ENCODE measurements at regions of chr19 and their contacts with region 1.

Region 1: GRCh38 chr19:44002566-44003460 is at the start of gene ZNF230:
- DNase-seq: peak; percentile 91
- H3K4me3 Mint-ChIP-seq: peak within 1 kb of the TSS; percentile 99
- H3K27ac Mint-ChIP-seq: peak within 1 kb of the TSS; percentile 94
- H3K4me1 Mint-ChIP-seq: peaks cover 18% of the 10 kb centered on the region
- H3K27me3 Mint-ChIP-seq: no peaks in the 10 kb centered on the region
- total RNA-seq, gene ZNF230: 3.8 TPM

Region 2: DNA sequence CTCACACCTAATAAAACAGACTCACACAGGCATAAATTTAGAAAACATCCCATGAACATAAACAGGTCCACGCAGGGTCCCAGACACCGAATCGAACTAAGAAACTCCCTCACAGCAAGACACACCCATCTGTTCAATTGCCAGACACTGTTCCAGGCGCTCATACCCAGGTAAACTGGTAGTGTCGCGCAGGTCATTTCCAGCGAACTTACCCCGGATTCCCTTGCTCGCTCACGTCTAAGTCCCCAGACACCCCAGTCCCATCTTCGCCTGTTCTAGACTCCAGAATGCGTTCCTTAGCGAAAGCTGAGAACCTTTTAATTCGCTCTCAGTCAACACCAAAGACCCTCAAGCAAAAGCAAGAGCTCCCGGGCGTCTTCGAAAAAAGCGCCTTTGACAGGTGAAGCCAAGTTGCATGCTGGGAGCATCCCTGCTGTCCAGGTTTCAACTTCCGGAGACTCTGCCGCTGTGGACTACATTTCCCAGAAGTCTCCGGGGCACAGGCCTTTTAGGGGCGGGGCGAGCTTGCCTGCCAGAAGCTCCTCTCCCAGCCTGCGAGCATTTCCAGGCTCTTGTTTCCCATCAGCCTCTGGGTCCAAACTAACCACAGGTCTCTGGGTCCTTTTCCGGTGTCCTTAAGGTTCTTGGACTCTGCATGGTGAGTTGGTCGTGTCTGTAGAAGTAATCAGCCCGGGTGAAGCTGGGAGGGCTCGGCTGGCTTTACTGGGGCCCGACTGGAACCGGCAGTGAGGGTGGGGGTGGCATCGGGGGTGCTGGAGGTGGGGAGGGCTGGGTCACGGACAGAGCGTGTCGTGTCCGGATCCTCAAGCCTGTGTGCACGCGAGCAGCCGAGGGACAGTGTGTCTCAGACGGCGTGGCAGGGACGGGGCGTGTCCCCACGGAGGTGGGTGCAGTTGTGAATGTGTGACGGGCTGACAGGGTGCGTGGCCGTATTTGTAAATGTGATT is 175.7 kb before region 1 on chr19 and contains the start of gene ZNF283:
- CTCF ChIA-PET with region 1: no interaction called
- POLR2A ChIA-PET with region 1: no interaction called
- intact Hi-C with region 1: no loop called
- DNase-seq: peak; percentile 92
- H3K4me3 Mint-ChIP-seq: peak within 1 kb of the TSS; percentile 88
- H3K27ac Mint-ChIP-seq: peak within 1 kb of the TSS; percentile 54
- H3K4me1 Mint-ChIP-seq: peaks cover 16% of the 10 kb centered on the region
- H3K27me3 Mint-ChIP-seq: no peaks in the 10 kb centered on the region
- total RNA-seq, gene ZNF283: 5.2 to 8.1 TPM

Region 3: DNA sequence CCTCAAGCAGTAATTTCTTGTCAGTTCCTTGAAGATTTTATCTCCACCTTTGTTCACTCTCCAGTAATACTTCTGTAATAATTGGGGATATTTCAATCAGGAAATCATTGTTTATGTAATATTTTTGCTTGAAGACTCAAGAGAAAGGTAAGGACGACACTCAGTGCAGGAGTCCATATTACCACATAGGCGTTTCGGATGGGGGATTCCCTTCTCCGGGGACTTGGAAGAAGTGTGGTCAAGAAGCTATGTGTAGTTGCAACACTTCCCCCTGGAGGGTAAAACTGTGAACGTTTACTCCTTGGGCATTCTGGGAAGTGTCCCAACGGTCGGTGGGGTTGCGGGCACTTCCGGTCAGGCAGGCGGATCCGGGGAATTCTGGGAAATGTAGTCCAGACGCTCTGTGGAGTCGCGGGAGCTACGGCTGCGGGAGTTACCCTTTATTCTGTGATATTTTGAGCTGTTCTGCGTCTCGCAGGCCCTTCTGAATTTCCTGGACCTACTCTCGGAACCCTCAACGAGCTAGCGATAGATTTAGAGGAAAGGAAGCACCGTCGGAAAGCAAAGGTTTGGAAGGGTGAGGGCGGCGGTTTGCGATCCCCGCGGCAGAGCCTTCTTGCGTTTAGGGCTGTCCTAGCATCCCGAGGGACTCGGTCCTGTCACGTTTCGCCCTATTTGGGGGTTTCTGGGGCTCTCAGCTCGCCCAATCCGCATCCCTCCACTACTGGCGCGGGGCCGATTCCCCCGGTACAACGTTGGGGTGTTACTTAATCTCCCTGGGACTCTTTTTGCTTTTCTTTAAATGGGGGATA is 51.8 kb before region 1 on chr19 and contains the start of gene ZNF221:
- CTCF ChIA-PET with region 1: no interaction called
- POLR2A ChIA-PET with region 1: no interaction called
- intact Hi-C with region 1: loop called (anchors 2 kb)
- DNase-seq: peak; percentile 82
- H3K4me3 Mint-ChIP-seq: peak within 1 kb of the TSS; percentile 92
- H3K27ac Mint-ChIP-seq: peak within 1 kb of the TSS; percentile 19
- H3K4me1 Mint-ChIP-seq: peaks cover 6% of the 10 kb centered on the region
- H3K27me3 Mint-ChIP-seq: peaks cover 15% of the 10 kb centered on the region
- total RNA-seq, gene ZNF221: 0.73 to 1.0 TPM

Region 4: DNA sequence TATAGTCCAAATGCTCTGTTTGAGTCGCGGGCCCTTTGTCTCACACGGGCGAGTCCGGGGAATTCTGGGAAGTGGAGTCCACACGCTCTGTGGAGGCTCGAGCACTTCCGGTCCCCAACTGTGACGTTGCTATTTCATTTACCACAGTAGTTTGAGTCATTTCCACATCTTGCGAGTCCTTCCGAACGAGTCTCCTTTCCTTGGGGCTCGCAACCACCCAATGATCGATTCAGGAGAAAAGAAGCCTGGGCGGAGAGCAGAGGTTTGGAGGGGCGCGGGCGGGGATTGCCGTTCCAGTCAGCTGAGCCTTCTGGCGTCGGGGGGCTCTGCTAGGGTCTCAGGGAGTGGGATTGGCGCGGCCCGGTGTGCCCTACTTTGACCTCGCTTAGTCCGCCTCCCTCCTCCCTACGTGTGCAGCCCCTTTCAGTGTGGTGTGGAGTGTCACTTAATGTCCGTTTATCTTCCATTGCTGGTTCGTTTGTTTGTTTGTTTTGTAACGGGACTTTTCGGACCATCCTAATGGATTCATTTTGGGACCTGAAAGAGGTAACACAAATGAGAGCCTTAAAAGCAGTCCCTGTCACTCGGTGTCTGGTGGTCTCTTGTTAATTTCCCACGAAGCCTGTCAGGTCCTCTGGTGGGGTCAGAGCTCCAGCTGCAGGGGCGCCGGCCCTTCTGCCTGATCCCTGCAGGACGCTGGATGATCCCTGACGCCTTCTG is 22.6 kb after region 1 on chr19 and contains the start of gene ZNF222:
- CTCF ChIA-PET with region 1: no interaction called
- POLR2A ChIA-PET with region 1: no interaction called
- intact Hi-C with region 1: loop called (anchors 1 kb)
- DNase-seq: peak; percentile 90
- H3K4me3 Mint-ChIP-seq: peak within 1 kb of the TSS; percentile 90
- H3K27ac Mint-ChIP-seq: peak within 1 kb of the TSS; percentile 60
- H3K4me1 Mint-ChIP-seq: peaks cover 18% of the 10 kb centered on the region
- H3K27me3 Mint-ChIP-seq: peaks cover 2% of the 10 kb centered on the region
- total RNA-seq, gene ZNF222: 0.88 to 0.94 TPM

Region 5: GRCh38 chr19:44093931-44094765 is 91.3 kb after region 1 on chr19 and contains the start of gene ZNF224:
- CTCF ChIA-PET with region 1: interaction called, 4 read pairs
- POLR2A ChIA-PET with region 1: no interaction called
- intact Hi-C with region 1: loop called (anchors 1 kb)
- DNase-seq: peak; percentile 90
- H3K4me3 Mint-ChIP-seq: peak within 1 kb of the TSS; percentile 95
- H3K27ac Mint-ChIP-seq: peak within 1 kb of the TSS; percentile 88
- H3K4me1 Mint-ChIP-seq: peaks cover 14% of the 10 kb centered on the region
- H3K27me3 Mint-ChIP-seq: no peaks in the 10 kb centered on the region
- total RNA-seq, gene ZNF224: 12.8 to 14.0 TPM

Region 6: GRCh38 chr19:44107751-44108150 is 104.9 kb after region 1 on chr19:
- CTCF ChIA-PET with region 1: no interaction called
- POLR2A ChIA-PET with region 1: no interaction called
- intact Hi-C with region 1: no loop called
- DNase-seq: no peak
- H3K4me3 Mint-ChIP-seq: no peak overlapping the region
- H3K27ac Mint-ChIP-seq: no peak overlapping the region
- H3K4me1 Mint-ChIP-seq: peaks cover 7% of the 10 kb centered on the region
- H3K27me3 Mint-ChIP-seq: no peaks in the 10 kb centered on the region

Region 7: GRCh38 chr19:44141191-44142058 is 138.6 kb after region 1 on chr19 and contains the start of gene ZNF234:
- CTCF ChIA-PET with region 1: no interaction called
- POLR2A ChIA-PET with region 1: no interaction called
- intact Hi-C with region 1: loop called (anchors 1 kb)
- DNase-seq: peak; percentile 78
- H3K4me3 Mint-ChIP-seq: peak within 1 kb of the TSS; percentile 91
- H3K27ac Mint-ChIP-seq: peak within 1 kb of the TSS; percentile 83
- H3K4me1 Mint-ChIP-seq: peaks cover 15% of the 10 kb centered on the region
- H3K27me3 Mint-ChIP-seq: no peaks in the 10 kb centered on the region
- total RNA-seq, gene ZNF234: 7.3 to 8.7 TPM

Measured in activated CD4-positive, alpha-beta memory T cell treated with anti-CD3 and anti-CD28 coated beads for 36 hours (primary cell).